Activated CD8-positive, alpha-beta memory T cell treated with anti-CD3 and anti-CD28 coated beads, Interleukin-2, amount 10 ng/mL, durations not matched to agents 7 days and 5 days (primary cell): ENCODE measurements at regions of chr17 and their contacts with region 1.

Region 1: GRCh38 chr17:68356520-68356919 is 65.2 kb downstream of the ARSG start:
- DNase-seq: peak; percentile 92
- ATAC-seq: peak; percentile 90
- H3K4me3 Mint-ChIP-seq: peak overlapping the region; percentile 74
- H3K27ac Mint-ChIP-seq: peak overlapping the region; percentile 95
- H3K4me1 Mint-ChIP-seq: peaks cover 79% of the 10 kb centered on the region
- H3K27me3 Mint-ChIP-seq: no peaks in the 10 kb centered on the region

Region 2: DNA sequence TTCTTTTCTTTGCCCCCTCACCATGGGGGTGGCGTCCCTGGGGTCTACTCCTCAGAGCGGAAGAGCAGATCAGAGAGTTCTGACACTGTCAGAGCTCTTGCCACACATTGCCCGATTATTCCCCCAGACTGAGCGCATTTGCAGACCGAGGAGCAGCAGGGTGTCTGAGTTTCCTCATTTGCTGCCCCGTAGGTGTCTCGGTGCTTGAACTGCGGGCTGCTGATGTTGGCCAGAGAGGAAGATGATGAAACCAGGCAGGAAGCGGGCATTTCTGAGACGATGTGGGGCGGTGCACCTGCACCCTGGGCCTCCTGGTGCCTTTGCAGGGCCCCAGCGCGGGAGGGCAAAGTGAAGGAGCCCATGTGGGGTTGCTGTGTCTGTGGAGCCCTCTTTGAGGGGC is 10.1 kb before region 1 on chr17:
- CTCF ChIA-PET with region 1: interaction called, 25 read pairs
- DNase-seq: peak; percentile 93
- ATAC-seq: peak; percentile 69
- H3K4me3 Mint-ChIP-seq: peak overlapping the region; percentile 61
- H3K27ac Mint-ChIP-seq: peak overlapping the region; percentile 99
- H3K4me1 Mint-ChIP-seq: peaks cover 80% of the 10 kb centered on the region
- H3K27me3 Mint-ChIP-seq: no peaks in the 10 kb centered on the region